ENCODE measurements at regions of chr7 and their contacts with region 1.

Region 1: GRCh38 chr7:8436965-8437364 is 3.6 kb downstream of the NXPH1 start:
- DNase-seq: peak; percentile 50 to 86
- H3K4me3 ChIP-seq: peak overlapping the region; percentile 17
- H3K4me1 ChIP-seq: peaks cover 4% of the 10 kb centered on the region; the same call in 1 of the 2 replicates
- H3K27me3 ChIP-seq: no peaks in the 10 kb centered on the region

Region 2: DNA sequence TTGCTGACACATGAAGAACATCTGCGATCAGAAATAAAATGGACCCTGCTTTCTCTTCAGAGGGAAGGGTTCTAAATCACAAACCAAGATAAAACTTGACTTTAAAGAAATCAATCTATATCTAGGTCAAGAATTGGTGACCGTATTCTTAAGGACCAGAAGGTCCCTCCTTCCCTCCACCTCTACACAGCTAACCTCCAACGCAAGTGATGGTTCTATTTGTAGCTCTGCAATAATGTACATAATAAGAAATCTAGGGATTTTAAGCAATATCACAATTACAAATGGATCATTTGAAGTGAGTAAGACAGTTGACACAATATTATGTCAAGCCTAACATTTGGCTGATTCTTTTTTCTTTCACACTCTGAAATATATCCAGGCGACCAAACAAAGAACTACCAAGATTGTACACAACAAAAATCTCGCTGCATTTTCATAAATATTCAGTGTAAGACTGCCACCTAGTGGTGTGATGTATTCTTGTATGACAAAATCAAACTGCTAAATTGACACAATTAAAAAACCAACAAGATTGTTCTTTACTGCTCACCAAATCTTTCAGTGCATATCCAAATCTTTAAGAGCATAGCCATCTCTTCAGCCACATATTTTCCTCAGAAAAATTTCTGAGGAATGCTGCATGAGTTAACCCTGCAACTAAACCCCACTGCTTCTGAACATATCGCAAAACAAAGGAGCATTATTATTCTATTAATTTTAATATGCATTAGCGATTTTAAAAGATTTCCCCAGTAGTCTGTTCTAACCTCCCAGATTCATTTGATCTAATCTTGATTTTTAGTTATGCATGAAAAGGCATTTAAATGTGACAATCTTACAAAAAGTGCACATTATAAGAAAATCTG is 219.5 kb before region 1 on chr7:
- in situ Hi-C with region 1: no loop called
- DNase-seq: peak; percentile 48 to 67
- H3K4me3 ChIP-seq: no peak overlapping the region
- H3K4me1 ChIP-seq: no peaks in the 10 kb centered on the region
- H3K27me3 ChIP-seq: no peaks in the 10 kb centered on the region

Region 3: DNA sequence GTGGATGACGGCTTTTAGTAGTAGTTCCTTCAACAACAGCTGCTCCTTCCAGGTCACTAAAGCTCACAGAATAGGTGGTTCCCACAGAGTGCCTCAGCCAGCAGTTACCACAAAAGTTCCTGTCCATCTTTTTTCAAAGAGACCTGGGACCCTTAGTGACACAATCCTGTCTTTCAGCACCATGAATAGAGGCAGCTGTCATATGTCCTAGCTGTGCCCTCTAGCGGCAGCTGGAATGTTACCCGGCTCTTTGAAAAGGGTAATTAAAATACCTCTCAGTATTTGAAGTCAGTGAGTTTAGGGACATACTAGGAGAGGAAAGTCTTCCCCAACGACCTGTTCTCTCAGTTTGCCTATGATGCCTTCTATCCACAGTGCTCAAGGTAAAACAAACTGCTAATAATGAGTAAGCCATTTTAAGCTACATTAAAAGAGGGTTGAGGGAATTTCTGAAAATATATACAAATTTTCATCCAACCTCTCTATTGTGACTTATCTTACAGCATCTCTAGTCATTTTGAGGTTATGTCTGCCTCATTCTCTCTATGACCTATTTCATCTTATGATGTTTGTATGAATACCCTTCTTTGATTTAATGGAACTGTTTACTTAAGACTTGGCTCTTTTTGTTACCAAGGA is 287.2 kb after region 1 on chr7:
- in situ Hi-C with region 1: loop called (anchors 25 kb)
- DNase-seq: peak; percentile 82
- H3K4me3 ChIP-seq: no peak overlapping the region
- H3K4me1 ChIP-seq: no peaks in the 10 kb centered on the region
- H3K27me3 ChIP-seq: no peaks in the 10 kb centered on the region

Region 4: GRCh38 chr7:8885480-8886000 is 448.6 kb after region 1 on chr7:
- in situ Hi-C with region 1: no loop called
- DNase-seq: no peak
- H3K4me3 ChIP-seq: no peak overlapping the region
- H3K4me1 ChIP-seq: peaks cover 3% of the 10 kb centered on the region; the same call in 1 of the 2 replicates
- H3K27me3 ChIP-seq: no peaks in the 10 kb centered on the region

Region 5: GRCh38 chr7:9091282-9091681 is 654.3 kb after region 1 on chr7:
- in situ Hi-C with region 1: loop called (anchors 25 kb)
- DNase-seq: peak; percentile 23 to 24
- H3K4me3 ChIP-seq: no peak overlapping the region
- H3K4me1 ChIP-seq: no peaks in the 10 kb centered on the region
- H3K27me3 ChIP-seq: no peaks in the 10 kb centered on the region

Measured in HAP-1 (cell line).